ENCODE measurements at regions of chr15 and their contacts with region 1.

Region 1: DNA sequence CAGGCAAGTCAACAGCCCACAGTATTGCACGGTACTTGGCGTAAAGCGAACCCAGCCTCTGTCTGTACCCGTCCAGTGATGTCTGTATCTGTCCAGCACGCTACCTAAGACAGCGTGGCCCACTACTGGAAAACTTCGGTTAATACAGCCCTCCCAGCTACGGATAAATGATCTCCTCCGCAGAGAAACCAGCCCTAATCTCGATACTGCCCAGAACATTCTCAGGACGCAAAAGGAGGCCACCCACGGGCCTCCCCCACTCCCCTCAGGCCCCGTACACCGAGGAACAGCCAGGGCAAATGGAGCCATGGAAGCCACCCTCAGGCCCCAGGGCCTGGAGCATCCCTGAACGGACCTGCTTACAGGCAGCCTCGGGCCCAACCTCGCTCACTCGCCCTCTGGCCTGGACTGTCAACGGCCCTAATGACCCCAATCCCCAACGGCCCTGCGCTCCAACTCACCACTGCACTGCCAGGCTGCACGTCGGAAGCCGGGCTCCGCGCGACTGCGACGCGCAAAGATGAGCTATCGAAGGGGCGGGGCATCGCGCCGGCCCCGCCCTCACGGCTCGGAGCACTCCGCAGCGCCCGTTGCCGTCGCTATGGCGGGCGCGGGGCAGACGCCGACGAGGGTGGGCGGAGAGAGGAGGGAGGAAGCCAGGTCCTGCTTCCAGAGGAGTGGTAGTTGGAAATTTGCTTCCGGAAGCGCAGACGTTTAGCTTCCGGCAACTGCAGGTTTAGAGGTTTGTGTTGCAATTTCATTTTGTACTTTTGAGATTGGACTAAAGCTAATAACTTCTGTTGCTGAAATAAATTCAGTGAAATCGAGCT is at the start of gene SKIC8:
- DNase-seq: peak; percentile 89
- ATAC-seq: peak; percentile 99
- H3K4me3 ChIP-seq: peak within 1 kb of the TSS; percentile 79
- H3K27ac ChIP-seq: peak within 1 kb of the TSS; percentile 59
- H3K4me1 ChIP-seq: no peaks in the 10 kb centered on the region; the same call in 1 of the 2 replicates
- H3K27me3 ChIP-seq: no peaks in the 10 kb centered on the region
- CTCF ChIP-seq: no peak
- POLR2A ChIP-seq: peak; percentile 90
- RAD21 ChIP-seq: no peak
- total RNA-seq, gene SKIC8: 102 and 124 TPM in 2 replicates

Region 2: GRCh38 chr15:76614725-76615124 is 1684.6 kb before region 1 on chr15:
- CTCF ChIA-PET with region 1: no interaction called
- POLR2A ChIA-PET with region 1: interaction called, 10 read pairs
- dilution Hi-C with region 1: no loop called
- in situ Hi-C with region 1: no loop called
- intact Hi-C with region 1: no loop called
- DNase-seq: no peak
- ATAC-seq: no peak
- H3K4me3 ChIP-seq: no peak overlapping the region
- H3K27ac ChIP-seq: no peak overlapping the region
- H3K4me1 ChIP-seq: no peaks in the 10 kb centered on the region
- H3K27me3 ChIP-seq: no peaks in the 10 kb centered on the region
- CTCF ChIP-seq: no peak
- POLR2A ChIP-seq: no peak
- RAD21 ChIP-seq: no peak